Naive thymus-derived CD4-positive, alpha-beta T cell (primary cell): ENCODE measurements at regions of chr12 and their contacts with region 1.

Region 1: DNA sequence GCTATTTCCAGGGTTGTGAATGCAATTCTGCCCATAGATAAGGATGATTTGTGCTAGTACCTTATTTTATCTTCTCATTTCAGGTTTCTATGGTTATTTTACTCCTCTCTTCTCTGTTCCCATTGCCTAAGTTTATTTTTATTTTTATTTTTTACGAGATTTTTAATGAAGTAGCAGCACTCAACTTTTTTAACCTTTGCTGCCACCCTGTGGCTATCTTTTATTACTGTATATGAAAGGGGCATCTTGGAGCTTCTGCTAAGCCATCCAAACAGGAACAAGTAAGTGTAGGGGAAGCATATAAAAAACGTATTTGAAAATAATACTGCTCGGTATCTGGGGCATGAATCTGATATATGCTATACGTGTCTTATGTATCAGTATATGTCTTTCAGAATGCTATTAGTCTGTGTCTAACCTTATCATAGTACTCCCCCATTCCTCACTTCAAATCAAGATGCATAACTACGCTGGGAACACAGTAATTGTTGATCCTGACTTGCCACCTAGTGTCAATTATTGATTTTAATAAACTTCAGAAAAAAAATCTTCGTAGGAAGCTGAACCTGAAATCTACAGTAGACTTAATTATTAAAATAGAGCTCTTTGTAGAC is 60.3 kb downstream of the KLRG1 start:
- DNase-seq: peak in 7 of 9 donors; percentile 41 to 71 (median 57)
- ATAC-seq: peak; percentile 84
- H3K4me3 ChIP-seq: no peak overlapping the region
- H3K4me3 Mint-ChIP-seq: no peak overlapping the region
- H3K27ac ChIP-seq: no peak overlapping the region
- H3K27ac Mint-ChIP-seq: peak overlapping the region in 4 of 9 donors; percentile 31 to 70 (median 40)
- H3K4me1 ChIP-seq: peaks cover 5 to 6% of the 10 kb centered on the region in 2 donors
- H3K4me1 Mint-ChIP-seq: peaks cover 2 to 32% (median 13%) of the 10 kb centered on the region in 7 donors
- H3K27me3 ChIP-seq: no peaks in the 10 kb centered on the region
- H3K27me3 Mint-ChIP-seq: peaks cover 0 to 4% (median 0%) of the 10 kb centered on the region in 5 donors

Region 2: GRCh38 chr12:8544295-8544694 is 505.3 kb before region 1 on chr12:
- CTCF ChIA-PET with region 1: interaction called, 4 read pairs
- POLR2A ChIA-PET with region 1: no interaction called
- intact Hi-C with region 1: loop called (anchors 1 to 2 kb)
- DNase-seq: peak; percentile 45 to 78 (median 67)
- ATAC-seq: peak; percentile 85
- H3K4me3 ChIP-seq: no peak overlapping the region
- H3K4me3 Mint-ChIP-seq: peak overlapping the region in 4 of 10 donors; percentile 25 to 58 (median 34)
- H3K27ac ChIP-seq: no peak overlapping the region
- H3K27ac Mint-ChIP-seq: no peak overlapping the region
- H3K4me1 ChIP-seq: no peaks in the 10 kb centered on the region
- H3K4me1 Mint-ChIP-seq: peaks cover 0 to 10% (median 0%) of the 10 kb centered on the region in 7 donors
- H3K27me3 ChIP-seq: no peaks in the 10 kb centered on the region
- H3K27me3 Mint-ChIP-seq: peaks cover 13 to 44% (median 26%) of the 10 kb centered on the region in 5 donors

Region 3: GRCh38 chr12:8681041-8681902 is 368.4 kb before region 1 on chr12:
- CTCF ChIA-PET with region 1: interaction called, 28 read pairs
- POLR2A ChIA-PET with region 1: no interaction called
- intact Hi-C with region 1: loop called (anchors 1 kb)
- DNase-seq: no peak
- ATAC-seq: no peak
- H3K4me3 ChIP-seq: no peak overlapping the region
- H3K4me3 Mint-ChIP-seq: no peak overlapping the region
- H3K27ac ChIP-seq: no peak overlapping the region
- H3K27ac Mint-ChIP-seq: no peak overlapping the region
- H3K4me1 ChIP-seq: no peaks in the 10 kb centered on the region
- H3K4me1 Mint-ChIP-seq: peaks cover 0 to 5% (median 0%) of the 10 kb centered on the region in 7 donors
- H3K27me3 ChIP-seq: no peaks in the 10 kb centered on the region
- H3K27me3 Mint-ChIP-seq: peaks cover 0 to 14% (median 0%) of the 10 kb centered on the region in 5 donors

Region 4: GRCh38 chr12:8697476-8698131 is 352.0 kb before region 1 on chr12 and contains the start of gene RIMKLB:
- CTCF ChIA-PET with region 1: interaction called, 7 read pairs
- POLR2A ChIA-PET with region 1: no interaction called
- intact Hi-C with region 1: loop called in 1 of 2 experiments (anchors 5 kb)
- DNase-seq: peak; percentile 59 to 75 (median 72)
- ATAC-seq: peak; percentile 93
- H3K4me3 ChIP-seq: peak within 1 kb of the TSS; percentile 79
- H3K4me3 Mint-ChIP-seq: peak within 1 kb of the TSS; percentile 89 to 95 (median 93)
- H3K27ac ChIP-seq: peak within 1 kb of the TSS; percentile 79
- H3K27ac Mint-ChIP-seq: peak within 1 kb of the TSS; percentile 65 to 94 (median 90)
- H3K4me1 ChIP-seq: peaks cover 0 to 17% of the 10 kb centered on the region in 2 donors
- H3K4me1 Mint-ChIP-seq: peaks cover 11 to 44% (median 42%) of the 10 kb centered on the region in 7 donors
- H3K27me3 ChIP-seq: no peaks in the 10 kb centered on the region
- H3K27me3 Mint-ChIP-seq: peaks cover 0 to 64% (median 0%) of the 10 kb centered on the region in 5 donors
- total RNA-seq, gene RIMKLB: 1.8 to 31.3 (median 18.2) TPM

Region 5: DNA sequence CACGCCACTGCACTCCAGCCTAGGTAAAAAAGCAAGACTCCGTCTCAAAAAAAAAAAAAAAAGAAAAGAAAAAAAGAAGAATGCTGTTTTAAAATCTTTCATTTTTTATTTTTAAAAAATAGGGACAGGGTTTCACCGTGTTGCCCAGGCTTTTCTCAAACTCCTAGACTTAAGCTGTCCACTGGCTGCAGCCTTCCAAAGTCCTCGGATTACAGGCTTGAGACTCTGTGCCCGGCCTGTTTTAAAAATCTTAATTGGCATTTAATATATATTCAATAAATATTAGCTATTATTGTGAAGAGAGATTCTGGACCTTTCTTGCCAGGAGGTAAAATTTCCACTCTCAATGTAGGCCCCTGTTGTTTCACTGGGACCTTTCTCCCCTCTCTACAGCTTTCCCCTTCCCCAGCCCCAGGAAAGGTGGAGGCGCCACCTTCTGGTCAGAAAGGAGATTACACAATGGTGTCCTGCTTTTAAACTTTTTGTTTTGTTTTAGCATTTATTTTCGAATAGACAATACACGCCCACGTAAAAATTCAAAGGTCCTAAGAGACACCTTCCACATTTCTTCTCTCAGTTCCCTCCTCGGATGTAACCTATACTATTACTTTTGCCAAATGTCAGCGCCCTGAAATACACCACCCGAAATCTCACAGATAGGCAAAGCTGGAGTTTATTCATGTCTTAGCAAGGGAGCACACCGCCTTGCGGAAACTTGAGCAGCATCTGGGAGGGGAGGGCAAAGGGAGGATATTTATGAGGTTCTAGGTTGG is 159.1 kb before region 1 on chr12:
- CTCF ChIA-PET with region 1: interaction called, 24 read pairs
- POLR2A ChIA-PET with region 1: interaction called, 3 read pairs
- intact Hi-C with region 1: loop called in 1 of 2 experiments (anchors 1 kb)
- DNase-seq: peak; percentile 29 to 78 (median 61)
- ATAC-seq: peak; percentile 91
- H3K4me3 ChIP-seq: peak overlapping the region; percentile 71
- H3K4me3 Mint-ChIP-seq: peak overlapping the region; percentile 77 to 100 (median 90)
- H3K27ac ChIP-seq: peak overlapping the region; percentile 59
- H3K27ac Mint-ChIP-seq: peak overlapping the region in 8 of 9 donors; percentile 8 to 92 (median 80)
- H3K4me1 ChIP-seq: no peaks in the 10 kb centered on the region
- H3K4me1 Mint-ChIP-seq: peaks cover 0 to 12% (median 5%) of the 10 kb centered on the region in 7 donors
- H3K27me3 ChIP-seq: no peaks in the 10 kb centered on the region
- H3K27me3 Mint-ChIP-seq: peaks cover 0 to 27% (median 0%) of the 10 kb centered on the region in 5 donors

Region 6: GRCh38 chr12:8943565-8944186 is 106.0 kb before region 1 on chr12:
- CTCF ChIA-PET with region 1: interaction called, 158 read pairs
- POLR2A ChIA-PET with region 1: interaction called, 26 read pairs
- intact Hi-C with region 1: no loop called
- DNase-seq: no peak
- ATAC-seq: no peak
- H3K4me3 ChIP-seq: no peak overlapping the region
- H3K4me3 Mint-ChIP-seq: no peak overlapping the region
- H3K27ac ChIP-seq: no peak overlapping the region
- H3K27ac Mint-ChIP-seq: peak overlapping the region in 6 of 9 donors; percentile 25 to 73 (median 51)
- H3K4me1 ChIP-seq: peaks cover 6 to 13% of the 10 kb centered on the region in 2 donors
- H3K4me1 Mint-ChIP-seq: peaks cover 21 to 33% (median 28%) of the 10 kb centered on the region in 7 donors
- H3K27me3 ChIP-seq: no peaks in the 10 kb centered on the region
- H3K27me3 Mint-ChIP-seq: no peaks in the 10 kb centered on the region

Region 7: DNA sequence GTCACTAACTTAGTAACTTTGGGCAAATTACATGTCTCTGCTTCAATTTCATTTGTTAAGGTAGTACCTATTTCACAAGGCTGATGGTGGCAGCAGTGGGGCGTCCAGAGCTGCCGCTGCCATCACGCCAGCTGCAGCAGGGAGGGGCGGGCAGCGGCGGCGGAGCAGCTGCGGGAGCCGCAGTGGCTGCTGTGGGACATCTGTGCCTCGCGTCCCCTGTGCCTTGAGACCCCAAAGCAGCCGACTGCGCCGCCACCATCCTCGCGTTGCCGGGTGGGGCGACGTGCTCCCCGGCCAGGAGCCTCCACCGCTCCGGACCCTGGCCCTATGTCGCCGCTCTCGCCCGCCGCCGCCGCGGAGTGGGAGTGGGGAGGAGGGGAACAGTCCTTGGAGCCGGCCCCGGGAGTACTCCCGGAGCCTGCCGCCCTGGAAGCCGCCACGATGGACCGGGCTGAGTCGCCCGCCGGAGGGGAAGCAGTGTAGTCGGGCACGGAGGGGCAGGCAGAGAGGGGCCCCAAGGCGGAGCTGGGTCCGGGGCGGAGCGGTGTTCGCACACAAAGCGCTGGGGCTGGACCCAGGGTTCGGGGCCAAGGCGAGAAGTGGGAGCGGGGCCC is 14.7 kb after region 1 on chr12:
- CTCF ChIA-PET with region 1: interaction called, 12 read pairs
- POLR2A ChIA-PET with region 1: no interaction called
- intact Hi-C with region 1: no loop called
- DNase-seq: peak in 8 of 9 donors; percentile 32 to 61 (median 42)
- ATAC-seq: peak; percentile 94
- H3K4me3 ChIP-seq: peak overlapping the region; percentile 53
- H3K4me3 Mint-ChIP-seq: peak overlapping the region; percentile 76 to 86 (median 81)
- H3K27ac ChIP-seq: peak overlapping the region; percentile 55
- H3K27ac Mint-ChIP-seq: peak overlapping the region in 5 of 9 donors; percentile 10 to 31 (median 20)
- H3K4me1 ChIP-seq: peaks cover 6 to 10% of the 10 kb centered on the region in 2 donors
- H3K4me1 Mint-ChIP-seq: peaks cover 4 to 13% (median 9%) of the 10 kb centered on the region in 7 donors
- H3K27me3 ChIP-seq: no peaks in the 10 kb centered on the region
- H3K27me3 Mint-ChIP-seq: peaks cover 0 to 30% (median 0%) of the 10 kb centered on the region in 5 donors

Region 8: DNA sequence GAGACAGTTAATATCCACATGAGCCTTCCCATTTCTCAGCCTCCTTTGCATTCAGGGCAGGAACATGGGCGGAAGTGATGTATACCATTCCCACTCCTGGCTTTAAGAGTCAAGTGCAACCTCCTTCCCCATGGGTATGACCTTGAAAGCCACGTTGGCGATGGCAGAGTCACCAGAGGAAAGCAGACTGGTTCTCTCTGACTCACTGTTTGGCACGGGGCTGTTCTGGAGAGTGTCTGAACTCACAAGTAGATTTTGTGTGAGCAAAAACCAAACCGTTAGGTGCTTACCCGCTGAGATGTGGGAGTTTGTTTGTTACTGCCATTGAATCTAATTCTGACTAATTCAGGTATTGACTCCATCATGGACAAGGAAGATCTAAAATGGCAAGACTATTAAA is 195.3 kb after region 1 on chr12:
- CTCF ChIA-PET with region 1: no interaction called
- POLR2A ChIA-PET with region 1: no interaction called
- intact Hi-C with region 1: no loop called
- DNase-seq: peak in 1 of 9 donors; percentile 56
- ATAC-seq: no peak
- H3K4me3 ChIP-seq: no peak overlapping the region
- H3K4me3 Mint-ChIP-seq: no peak overlapping the region
- H3K27ac ChIP-seq: no peak overlapping the region
- H3K27ac Mint-ChIP-seq: no peak overlapping the region
- H3K4me1 ChIP-seq: peaks cover 0 to 5% of the 10 kb centered on the region in 2 donors
- H3K4me1 Mint-ChIP-seq: peaks cover 4 to 17% (median 13%) of the 10 kb centered on the region in 7 donors
- H3K27me3 ChIP-seq: no peaks in the 10 kb centered on the region
- H3K27me3 Mint-ChIP-seq: peaks cover 4 to 22% (median 18%) of the 10 kb centered on the region in 5 donors